Left ventricle myocardium inferior (tissue), 1 donor: ENCODE measurements at regions of chr18 and their contacts with region 1.

Region 1: GRCh38 chr18:79378542-79379250 is 17.0 kb upstream of the NFATC1 start:
- DNase-seq: peak; percentile 79
- H3K4me3 ChIP-seq: no peak overlapping the region
- H3K27ac ChIP-seq: no peak overlapping the region
- H3K4me1 ChIP-seq: peaks cover 4% of the 10 kb centered on the region
- H3K27me3 ChIP-seq: no peaks in the 10 kb centered on the region
- CTCF ChIP-seq: peak; percentile 97

Region 2: GRCh38 chr18:78794071-78794430 is 584.6 kb before region 1 on chr18:
- intact Hi-C with region 1: no loop called
- DNase-seq: no peak
- H3K4me3 ChIP-seq: no peak overlapping the region
- H3K27ac ChIP-seq: no peak overlapping the region
- H3K4me1 ChIP-seq: no peaks in the 10 kb centered on the region
- H3K27me3 ChIP-seq: peaks cover 43% of the 10 kb centered on the region
- CTCF ChIP-seq: no peak

Region 3: DNA sequence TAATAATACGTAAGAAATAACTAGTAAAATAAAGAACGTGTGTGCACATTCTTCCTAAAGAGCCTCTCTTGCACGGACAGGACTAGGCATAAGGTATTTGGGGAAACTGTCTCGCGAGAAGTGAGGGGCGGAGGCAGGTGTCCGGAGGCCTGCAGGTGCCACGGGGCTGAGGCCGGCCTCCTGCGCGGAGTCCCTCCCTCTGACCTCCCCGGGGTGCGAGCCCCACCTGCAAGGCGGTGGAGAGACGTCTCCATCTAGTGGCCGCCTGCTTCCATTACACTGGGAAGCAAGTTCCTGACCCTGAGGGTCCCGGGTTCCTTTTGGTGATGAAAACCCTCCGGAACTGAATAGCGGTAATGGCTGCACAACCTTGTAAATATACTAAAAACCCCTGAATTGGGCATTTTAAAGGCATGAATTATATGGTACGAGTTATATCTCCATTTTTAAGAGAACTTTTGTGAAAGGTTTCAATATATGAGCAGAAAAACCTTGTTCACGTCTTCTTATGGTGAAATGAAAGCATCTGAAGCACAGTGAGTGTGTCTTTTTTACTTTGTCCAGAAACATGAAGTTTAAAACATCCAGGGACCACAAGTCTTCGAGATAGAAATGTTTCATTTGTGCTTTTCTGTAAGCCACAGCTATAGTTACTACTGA is 265.4 kb after region 1 on chr18:
- intact Hi-C with region 1: loop called (anchors 2 kb)
- DNase-seq: peak; percentile 60
- H3K4me3 ChIP-seq: no peak overlapping the region
- H3K27ac ChIP-seq: no peak overlapping the region
- H3K4me1 ChIP-seq: peaks cover 5% of the 10 kb centered on the region
- H3K27me3 ChIP-seq: peaks cover 45% of the 10 kb centered on the region
- CTCF ChIP-seq: peak; percentile 98